Esophagus squamous epithelium (tissue), 5 donors: ENCODE measurements at regions of chr11 and their contacts with region 1.

Region 1: DNA sequence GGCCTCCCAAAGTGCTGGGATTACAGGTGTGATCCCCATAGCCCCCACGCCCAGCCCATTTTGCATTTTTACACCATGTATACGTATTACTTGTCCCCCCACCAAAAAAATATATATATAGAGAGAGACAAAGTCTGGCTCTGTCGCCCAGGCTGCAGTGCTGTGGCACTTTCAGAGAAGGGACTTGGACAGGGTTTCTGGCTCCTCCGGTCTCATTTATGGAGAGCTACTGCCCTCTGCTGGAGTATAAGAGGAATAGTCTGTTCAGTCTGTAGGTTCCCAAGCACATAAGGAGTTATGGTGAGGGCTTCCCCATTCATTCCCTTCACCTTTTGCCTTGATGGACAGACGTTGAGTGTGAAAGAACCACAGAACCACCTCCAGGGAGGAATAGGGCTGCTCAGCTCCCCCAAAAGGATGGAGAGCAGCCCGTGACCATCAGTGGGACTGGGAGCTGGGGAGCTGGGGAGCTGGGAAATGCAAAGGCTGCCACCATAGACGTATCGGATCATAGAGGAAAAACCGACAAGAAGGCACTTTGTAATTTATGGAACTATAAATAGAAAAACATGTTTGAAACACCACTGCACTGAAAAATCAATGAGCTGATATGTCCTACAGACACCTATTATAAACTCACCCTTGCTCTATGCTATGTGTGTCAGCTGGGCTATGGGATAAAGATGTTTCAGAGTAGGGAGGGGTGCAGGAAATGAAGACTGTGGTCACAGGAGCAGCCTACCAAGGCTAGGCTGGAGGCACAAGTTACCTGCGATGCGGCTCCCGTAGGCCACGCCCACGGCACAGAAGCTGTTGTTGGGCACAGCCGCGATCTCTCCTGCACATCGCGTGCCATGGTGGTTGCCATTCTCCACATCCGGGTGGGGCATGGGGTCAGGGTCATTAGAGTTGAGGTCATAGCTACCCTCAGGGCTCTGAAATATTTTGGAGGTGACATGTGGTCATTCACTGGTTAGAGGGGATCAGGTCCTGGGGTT is 5.2 kb downstream of the PCSK7 start:
- DNase-seq: no peak
- H3K4me3 ChIP-seq: no peak overlapping the region
- H3K27ac ChIP-seq: no peak overlapping the region
- H3K4me1 ChIP-seq: peaks cover 15 to 51% (median 17%) of the 10 kb centered on the region in 3 donors
- H3K27me3 ChIP-seq: no peaks in the 10 kb centered on the region
- CTCF ChIP-seq: peak; percentile 52 to 84 (median 77)
- POLR2A ChIP-seq: no peak

Region 2: GRCh38 chr11:117121176-117121575 is 105.5 kb before region 1 on chr11:
- intact Hi-C with region 1: no loop called
- DNase-seq: no peak
- H3K4me3 ChIP-seq: no peak overlapping the region
- H3K27ac ChIP-seq: no peak overlapping the region
- H3K4me1 ChIP-seq: no peaks in the 10 kb centered on the region
- H3K27me3 ChIP-seq: no peaks in the 10 kb centered on the region
- CTCF ChIP-seq: no peak
- POLR2A ChIP-seq: no peak

Region 3: DNA sequence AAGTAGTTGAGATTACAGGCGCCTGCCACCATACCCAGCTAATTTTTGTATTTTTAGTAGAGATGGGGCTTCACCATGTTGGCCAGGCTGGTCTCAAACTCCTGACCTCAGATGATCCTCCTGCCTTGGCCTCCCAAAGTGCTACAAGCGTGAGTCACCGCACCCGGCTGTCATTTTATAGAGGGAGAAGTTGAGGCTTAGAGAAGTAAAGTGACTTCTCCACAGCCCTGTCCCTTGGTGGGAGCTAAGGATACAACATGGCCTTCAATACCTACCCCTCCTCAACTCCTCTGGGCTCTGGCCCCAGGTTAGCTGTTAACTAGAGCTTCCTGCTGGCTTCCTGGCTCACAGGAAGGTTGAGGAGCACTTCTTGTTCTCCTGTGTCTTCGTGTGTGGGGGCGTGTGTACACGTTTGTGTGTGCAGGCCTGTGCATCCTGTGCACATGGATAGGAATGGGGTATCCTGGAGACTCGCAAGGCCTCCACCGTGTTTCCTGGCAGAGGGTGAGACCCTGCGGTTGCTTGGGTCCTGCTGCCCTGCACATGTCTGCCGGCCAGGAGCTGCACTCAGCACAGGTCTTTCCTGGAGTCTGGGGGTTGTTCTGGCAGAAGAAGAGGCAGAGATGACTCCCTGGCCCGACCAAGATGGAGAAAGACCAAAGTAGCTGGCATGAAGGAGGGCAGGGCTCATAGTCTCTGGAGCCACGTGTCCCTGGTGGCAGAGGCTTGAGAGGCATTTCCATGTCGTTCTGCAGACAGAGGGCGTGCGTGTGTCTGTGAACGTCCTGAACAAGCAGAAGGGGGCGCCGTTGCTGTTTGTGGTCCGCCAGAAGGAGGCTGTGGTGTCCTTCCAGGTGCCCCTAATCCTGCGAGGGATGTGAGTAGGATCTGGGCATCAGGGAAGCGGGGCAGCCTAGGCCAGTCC is 45.8 kb before region 1 on chr11:
- intact Hi-C with region 1: loop called (anchors 5 kb)
- DNase-seq: peak; percentile 28
- H3K4me3 ChIP-seq: peak overlapping the region in 1 of 4 donors; percentile 29
- H3K27ac ChIP-seq: peak overlapping the region in 3 of 4 donors; percentile 12 to 97 (median 25)
- H3K4me1 ChIP-seq: peaks cover 16 to 55% (median 30%) of the 10 kb centered on the region in 3 donors
- H3K27me3 ChIP-seq: no peaks in the 10 kb centered on the region
- CTCF ChIP-seq: peak; percentile 42 to 79 (median 56)
- POLR2A ChIP-seq: no peak